ENCODE measurements at regions of chr15 and their contacts with region 1.

Region 1: GRCh38 chr15:48975472-48976419 is 12.0 kb upstream of the SHC4 start:
- DNase-seq: peak; percentile 92
- H3K4me3 ChIP-seq: peak overlapping the region; percentile 44
- H3K27ac ChIP-seq: peak overlapping the region; percentile 55
- H3K4me1 ChIP-seq: peaks cover 7% of the 10 kb centered on the region
- H3K27me3 ChIP-seq: no peaks in the 10 kb centered on the region
- CTCF ChIP-seq: peak; percentile 73

Region 2: DNA sequence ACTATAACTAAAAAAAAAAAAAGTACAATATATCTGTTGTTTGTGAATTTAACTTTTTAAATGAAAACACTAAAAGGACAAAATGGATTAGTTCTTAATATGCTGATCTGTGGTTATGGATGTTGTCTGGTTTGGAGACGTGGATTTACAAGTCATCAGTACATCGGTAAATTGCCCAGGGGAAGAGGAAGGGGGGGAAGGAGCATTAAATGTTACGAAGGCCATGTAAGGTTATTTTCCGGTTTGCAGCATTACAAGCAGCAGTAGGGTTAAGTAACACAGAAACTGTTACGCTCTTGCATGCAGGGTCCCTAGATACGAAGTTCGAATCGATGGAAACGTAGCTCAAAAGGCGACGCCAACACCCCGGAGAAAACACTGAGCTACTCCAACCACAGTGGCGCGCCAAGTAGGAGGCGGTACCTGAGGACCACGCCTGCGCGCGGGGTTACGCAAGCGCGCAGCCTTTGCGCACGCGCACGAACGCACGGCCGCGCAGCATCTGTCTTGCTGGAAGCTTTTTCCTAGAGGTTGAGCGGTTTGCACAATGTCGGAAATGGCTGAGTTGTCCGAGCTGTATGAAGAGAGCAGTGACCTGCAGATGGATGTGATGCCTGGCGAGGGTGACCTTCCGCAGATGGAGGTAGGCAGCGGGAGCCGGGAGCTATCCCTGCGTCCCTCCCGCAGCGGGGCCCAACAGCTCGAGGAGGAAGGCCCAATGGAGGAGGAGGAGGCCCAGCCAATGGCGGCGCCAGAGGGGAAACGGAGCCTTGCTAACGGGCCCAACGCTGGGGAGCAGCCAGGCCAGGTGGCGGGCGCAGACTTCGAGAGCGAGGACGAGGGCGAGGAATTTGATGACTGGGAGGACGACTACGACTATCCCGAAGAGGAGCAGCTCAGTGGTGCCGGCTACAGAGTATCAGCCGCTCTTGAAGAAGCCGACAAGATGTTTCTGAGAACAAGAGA is 97.8 kb before region 1 on chr15 and contains the start of gene EID1:
- CTCF ChIA-PET with region 1: interaction called, 11 read pairs
- POLR2A ChIA-PET with region 1: interaction called, 3 read pairs
- intact Hi-C with region 1: no loop called
- DNase-seq: peak; percentile 96
- H3K4me3 ChIP-seq: peak within 1 kb of the TSS; percentile 69
- H3K27ac ChIP-seq: peak within 1 kb of the TSS; percentile 73
- H3K4me1 ChIP-seq: peaks cover 9% of the 10 kb centered on the region
- H3K27me3 ChIP-seq: no peaks in the 10 kb centered on the region
- CTCF ChIP-seq: no peak
- total RNA-seq, gene EID1: 128 and 137 TPM in 2 replicates

Region 3: DNA sequence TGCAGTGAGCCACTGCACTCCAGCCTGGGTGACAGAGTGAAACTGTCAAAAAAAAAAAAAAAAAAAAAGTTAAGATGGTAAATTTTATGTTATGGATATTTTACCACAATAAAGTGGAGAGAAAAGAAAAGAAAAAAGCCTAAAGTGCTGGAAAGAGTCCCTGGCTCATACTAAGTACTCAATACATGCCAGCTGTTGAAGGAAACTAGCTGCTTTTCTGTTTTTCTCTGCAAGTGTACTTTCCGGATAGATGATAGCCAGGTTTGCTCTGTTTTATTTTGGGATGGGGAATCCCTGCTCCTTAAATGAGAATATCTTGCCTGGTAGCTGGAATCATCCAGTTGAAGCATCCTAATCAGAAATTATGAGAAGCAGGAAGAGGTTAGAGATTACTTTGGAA is 86.9 kb before region 1 on chr15:
- CTCF ChIA-PET with region 1: no interaction called
- POLR2A ChIA-PET with region 1: no interaction called
- intact Hi-C with region 1: no loop called
- DNase-seq: no peak
- H3K4me3 ChIP-seq: no peak overlapping the region
- H3K27ac ChIP-seq: no peak overlapping the region
- H3K4me1 ChIP-seq: peaks cover 4% of the 10 kb centered on the region
- H3K27me3 ChIP-seq: no peaks in the 10 kb centered on the region
- CTCF ChIP-seq: no peak

Region 4: GRCh38 chr15:48963524-48964113 is 12.1 kb before region 1 on chr15 and contains the start of gene SHC4:
- CTCF ChIA-PET with region 1: interaction called, 13 read pairs
- POLR2A ChIA-PET with region 1: no interaction called
- intact Hi-C with region 1: no loop called
- DNase-seq: peak; percentile 93
- H3K4me3 ChIP-seq: peak within 1 kb of the TSS; percentile 48
- H3K27ac ChIP-seq: no peak within 1 kb of the TSS
- H3K4me1 ChIP-seq: peaks cover 4% of the 10 kb centered on the region
- H3K27me3 ChIP-seq: no peaks in the 10 kb centered on the region
- CTCF ChIP-seq: peak; percentile 56
- total RNA-seq, gene SHC4: 0.57 and 0.73 TPM in 2 replicates